ENCODE measurements at regions of chr6 and their contacts with region 1.

Region 1: GRCh38 chr6:130843575-130844320 is 16.5 kb downstream of the SMLR1 start:
- DNase-seq: no peak
- H3K4me3 ChIP-seq: no peak overlapping the region
- H3K27ac ChIP-seq: peak overlapping the region; percentile 10 to 23
- H3K4me1 ChIP-seq: peaks cover 0 to 6% of the 10 kb centered on the region in 2 donors
- H3K27me3 ChIP-seq: no peaks in the 10 kb centered on the region
- CTCF ChIP-seq: peak in 3 of 4 experiments; percentile 36 to 68 (median 63)
- POLR2A ChIP-seq: no peak

Region 2: DNA sequence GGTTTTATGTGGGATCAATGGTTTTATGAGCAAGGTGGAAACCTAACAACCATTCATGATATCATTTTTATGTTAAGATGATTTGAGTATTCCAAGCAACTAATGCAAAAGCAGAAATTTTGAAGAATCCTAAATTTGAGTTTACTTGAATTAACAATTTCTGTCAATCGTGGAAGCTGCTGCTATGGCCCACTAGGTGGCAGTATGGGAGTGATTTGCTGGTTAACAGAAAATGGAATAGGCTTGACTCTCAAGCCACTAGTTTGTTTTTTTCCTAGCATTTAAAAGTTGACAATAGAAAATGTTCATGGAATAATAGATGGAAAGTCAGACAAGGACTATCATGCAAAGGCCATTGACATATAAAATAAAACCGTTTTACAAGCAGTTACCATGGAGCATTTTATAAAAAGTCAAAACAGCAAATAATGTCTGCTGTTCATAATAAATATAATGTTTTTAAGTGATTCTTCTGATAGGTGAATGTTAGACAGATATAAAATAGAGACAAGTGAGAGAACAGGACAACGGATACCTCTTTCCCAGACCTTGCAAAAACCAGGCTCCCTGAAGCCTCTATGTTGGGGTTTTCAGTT is 521.0 kb before region 1 on chr6:
- intact Hi-C with region 1: loop called (anchors 10 kb)
- DNase-seq: peak; percentile 33 to 58
- H3K4me3 ChIP-seq: no peak overlapping the region
- H3K27ac ChIP-seq: no peak overlapping the region
- H3K4me1 ChIP-seq: no peaks in the 10 kb centered on the region
- H3K27me3 ChIP-seq: no peaks in the 10 kb centered on the region
- CTCF ChIP-seq: peak; percentile 78 to 90 (median 86)
- POLR2A ChIP-seq: no peak